Activated CD8-positive, alpha-beta memory T cell treated with anti-CD3 and anti-CD28 coated beads, Interleukin-2, amount 10 ng/mL, durations not matched to agents 7 days and 5 days (primary cell): ENCODE measurements at regions of chr22 and their contacts with region 1.

Region 1: GRCh38 chr22:36065775-36066559 is 37.3 kb upstream of the RBFOX2 start:
- DNase-seq: peak; percentile 81
- ATAC-seq: peak; percentile 87
- H3K4me3 Mint-ChIP-seq: peak overlapping the region; percentile 77
- H3K27ac Mint-ChIP-seq: peak overlapping the region; percentile 80
- H3K4me1 Mint-ChIP-seq: peaks cover 8% of the 10 kb centered on the region
- H3K27me3 Mint-ChIP-seq: peaks cover 18% of the 10 kb centered on the region

Region 2: GRCh38 chr22:35489239-35489638 is 576.7 kb before region 1 on chr22:
- CTCF ChIA-PET with region 1: no interaction called
- DNase-seq: no peak
- ATAC-seq: no peak
- H3K4me3 Mint-ChIP-seq: no peak overlapping the region
- H3K27ac Mint-ChIP-seq: no peak overlapping the region
- H3K4me1 Mint-ChIP-seq: no peaks in the 10 kb centered on the region
- H3K27me3 Mint-ChIP-seq: peaks cover 4% of the 10 kb centered on the region

Region 3: GRCh38 chr22:35627264-35628041 is 438.5 kb before region 1 on chr22:
- CTCF ChIA-PET with region 1: interaction called, 11 read pairs
- DNase-seq: peak; percentile 80
- ATAC-seq: peak; percentile 67
- H3K4me3 Mint-ChIP-seq: peak overlapping the region; percentile 76
- H3K27ac Mint-ChIP-seq: peak overlapping the region; percentile 61
- H3K4me1 Mint-ChIP-seq: peaks cover 28% of the 10 kb centered on the region
- H3K27me3 Mint-ChIP-seq: peaks cover 17% of the 10 kb centered on the region

Region 4: DNA sequence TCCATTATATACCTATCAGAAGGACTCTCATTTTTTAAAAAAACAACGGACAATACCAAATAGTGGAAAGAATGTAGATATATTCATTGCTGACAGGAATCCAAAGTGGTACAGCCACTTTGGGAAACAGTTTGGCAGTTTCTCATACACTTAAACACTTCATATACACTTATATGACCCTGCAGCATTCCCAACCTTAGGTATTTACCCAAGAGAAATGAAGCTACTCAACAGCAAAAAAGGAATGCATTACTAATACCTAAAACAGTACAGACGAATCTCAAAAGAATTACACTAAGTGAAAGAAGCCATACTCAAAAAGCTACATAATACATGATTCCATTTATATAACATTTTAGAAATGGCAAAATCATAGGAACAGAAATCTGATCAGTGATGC is 88.8 kb before region 1 on chr22:
- CTCF ChIA-PET with region 1: no interaction called
- DNase-seq: no peak
- ATAC-seq: no peak
- H3K4me3 Mint-ChIP-seq: no peak overlapping the region
- H3K27ac Mint-ChIP-seq: no peak overlapping the region
- H3K4me1 Mint-ChIP-seq: no peaks in the 10 kb centered on the region
- H3K27me3 Mint-ChIP-seq: peaks cover 22% of the 10 kb centered on the region

Region 5: DNA sequence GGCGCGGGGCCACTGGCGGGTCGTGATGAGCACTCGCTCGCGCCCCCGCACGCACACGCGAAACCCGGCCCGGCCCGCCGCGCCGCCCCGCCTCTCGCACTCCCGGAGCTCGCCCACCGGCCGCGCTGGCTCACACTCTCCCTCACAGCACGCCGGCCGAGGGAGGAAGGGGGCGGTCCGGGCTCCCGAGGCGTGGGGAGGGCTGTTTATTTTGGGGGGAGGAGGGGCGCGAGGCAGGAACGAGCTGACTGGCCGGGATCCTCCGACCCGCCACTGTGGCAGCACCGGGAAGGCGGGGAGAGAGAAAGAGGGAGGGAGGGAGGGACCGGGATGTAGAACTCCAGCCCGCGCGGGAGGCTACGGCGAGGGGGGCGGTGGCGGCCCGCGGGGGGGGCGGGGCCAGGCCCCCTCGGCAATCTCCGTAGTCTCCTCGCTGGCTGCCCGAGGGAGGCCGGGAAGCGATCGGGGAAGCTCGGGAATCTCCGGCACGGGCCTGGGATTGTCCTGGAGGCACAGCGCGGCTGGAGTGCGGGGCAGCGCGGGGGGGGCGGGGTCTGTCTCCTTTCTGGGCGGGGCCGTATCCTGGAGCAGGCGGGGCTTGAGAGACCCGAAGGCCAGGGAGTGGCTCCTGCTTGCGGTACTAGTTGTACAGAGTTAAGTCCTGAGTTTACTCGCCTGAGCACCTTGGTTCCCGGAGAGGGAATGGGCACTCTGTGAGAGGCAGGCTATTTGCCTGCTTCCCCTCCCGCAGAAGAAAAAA is 37.1 kb before region 1 on chr22 and contains the start of gene RBFOX2:
- CTCF ChIA-PET with region 1: interaction called, 33 read pairs
- DNase-seq: peak; percentile 67
- ATAC-seq: peak; percentile 83
- H3K4me3 Mint-ChIP-seq: peak within 1 kb of the TSS; percentile 84
- H3K27ac Mint-ChIP-seq: peak within 1 kb of the TSS; percentile 37
- H3K4me1 Mint-ChIP-seq: peaks cover 16% of the 10 kb centered on the region
- H3K27me3 Mint-ChIP-seq: peaks cover 47% of the 10 kb centered on the region
- total RNA-seq, gene RBFOX2: 0.99 to 1.9 TPM

Region 6: GRCh38 chr22:36052505-36053270 is 13.3 kb before region 1 on chr22:
- CTCF ChIA-PET with region 1: interaction called, 60 read pairs
- DNase-seq: peak; percentile 52
- ATAC-seq: peak; percentile 76
- H3K4me3 Mint-ChIP-seq: no peak overlapping the region
- H3K27ac Mint-ChIP-seq: no peak overlapping the region
- H3K4me1 Mint-ChIP-seq: peaks cover 11% of the 10 kb centered on the region
- H3K27me3 Mint-ChIP-seq: peaks cover 10% of the 10 kb centered on the region

Region 7: DNA sequence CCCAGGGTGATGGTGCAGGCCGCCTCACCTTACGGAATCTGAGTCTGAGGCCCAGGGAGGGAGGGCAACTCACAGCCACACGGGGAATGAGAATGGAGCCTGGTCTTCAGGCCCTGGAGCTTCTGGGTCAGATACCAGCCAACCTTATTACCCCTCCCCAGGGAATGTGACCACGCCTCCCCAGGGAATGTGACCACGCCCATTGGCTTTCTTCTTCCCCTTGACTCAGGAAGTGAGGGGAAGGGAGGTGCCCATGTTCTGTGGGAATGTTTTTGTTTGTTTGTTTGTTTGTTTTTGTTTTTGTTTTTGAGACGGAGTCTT is 20.2 kb after region 1 on chr22:
- CTCF ChIA-PET with region 1: interaction called, 70 read pairs
- DNase-seq: no peak
- ATAC-seq: no peak
- H3K4me3 Mint-ChIP-seq: no peak overlapping the region
- H3K27ac Mint-ChIP-seq: no peak overlapping the region
- H3K4me1 Mint-ChIP-seq: peaks cover 7% of the 10 kb centered on the region
- H3K27me3 Mint-ChIP-seq: no peaks in the 10 kb centered on the region

Region 8: DNA sequence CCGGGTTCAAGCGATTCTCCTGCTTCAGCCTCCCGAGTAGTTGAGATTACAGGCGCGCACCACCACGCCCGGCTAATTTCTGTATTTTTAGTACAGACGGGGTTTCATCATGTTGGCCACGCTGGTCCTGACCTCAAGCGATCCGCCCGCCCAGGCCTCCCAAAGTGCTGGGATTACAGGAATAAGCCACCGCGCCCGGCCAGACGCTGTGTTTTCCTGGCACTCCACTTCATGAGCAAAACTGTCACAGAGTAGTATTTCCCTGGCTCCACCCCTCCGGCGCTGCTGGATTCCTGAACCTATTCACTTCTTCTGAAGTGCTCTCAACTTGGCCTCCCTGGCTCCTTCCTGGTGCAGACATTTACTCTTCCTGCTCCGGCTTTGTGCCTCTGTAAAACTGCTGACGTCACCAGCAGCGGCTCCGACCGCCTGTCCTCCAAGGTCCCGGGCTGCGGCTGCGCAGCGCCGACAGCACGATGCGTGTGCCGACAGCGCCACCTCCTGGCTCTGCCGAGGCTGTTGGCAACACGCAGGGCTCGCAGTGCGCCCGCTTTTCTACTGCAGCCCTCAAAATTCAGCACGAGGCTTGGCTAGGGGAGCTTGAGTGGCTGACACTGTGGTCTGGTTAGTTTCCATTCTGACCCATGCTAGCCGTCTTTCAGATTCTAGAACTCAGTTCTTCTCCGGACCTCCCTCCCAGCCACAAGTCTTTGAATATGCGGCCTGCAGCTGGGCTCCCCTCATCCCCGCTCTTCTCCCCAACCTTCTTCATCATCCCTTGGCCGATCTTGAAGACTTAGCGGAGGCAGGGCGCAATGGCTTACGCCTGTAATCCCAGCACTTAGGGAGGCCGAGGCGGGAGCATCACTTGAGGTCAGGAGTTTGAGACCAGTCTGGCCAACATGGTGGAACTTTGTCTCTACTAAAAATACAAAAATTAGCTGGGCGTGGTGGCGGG is 58.0 kb after region 1 on chr22:
- CTCF ChIA-PET with region 1: interaction called, 33 read pairs
- DNase-seq: peak; percentile 95
- ATAC-seq: peak; percentile 99
- H3K4me3 Mint-ChIP-seq: peak overlapping the region; percentile 56
- H3K27ac Mint-ChIP-seq: peak overlapping the region; percentile 79
- H3K4me1 Mint-ChIP-seq: peaks cover 15% of the 10 kb centered on the region
- H3K27me3 Mint-ChIP-seq: peaks cover 2% of the 10 kb centered on the region

Region 9: DNA sequence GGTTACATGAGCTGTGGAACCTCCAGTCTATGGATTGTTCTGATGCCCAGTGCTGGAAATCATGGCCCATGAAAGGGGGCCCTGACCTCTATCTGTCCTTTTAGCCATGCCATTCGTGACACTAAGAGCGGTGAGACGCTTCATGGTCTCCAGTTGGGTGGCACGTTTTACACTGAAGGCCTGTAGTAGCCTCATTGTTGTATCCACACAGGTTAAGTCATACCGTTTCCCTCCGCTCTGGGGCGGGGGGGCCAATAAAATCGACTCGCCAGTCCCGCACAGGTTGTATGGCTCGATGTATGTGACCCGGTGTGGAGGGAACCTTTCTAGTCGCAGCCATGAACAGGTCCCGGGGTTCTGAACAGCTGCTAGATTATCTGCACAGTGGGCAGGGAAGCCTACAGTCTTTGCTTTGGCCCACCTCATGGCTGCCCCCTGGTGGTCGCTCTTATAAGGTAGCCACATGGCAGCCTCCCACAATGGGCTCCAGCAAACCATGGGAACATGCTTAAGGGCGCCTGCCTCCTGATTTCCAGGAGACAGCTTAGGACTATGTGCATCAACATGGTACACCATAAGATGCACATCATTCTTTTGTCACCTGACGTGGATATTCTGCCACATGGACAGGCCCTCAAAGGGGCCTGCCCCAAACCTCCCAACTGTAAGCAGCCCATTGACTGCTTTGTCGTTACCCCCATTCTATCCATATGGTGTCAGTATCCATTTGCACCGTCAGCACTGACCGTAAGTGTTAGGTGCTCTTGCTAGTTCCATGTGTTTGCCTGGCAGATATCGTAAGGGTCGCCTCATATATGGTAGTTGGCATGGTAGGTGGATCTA is 114.3 kb after region 1 on chr22:
- CTCF ChIA-PET with region 1: interaction called, 18 read pairs
- DNase-seq: peak; percentile 89
- ATAC-seq: peak; percentile 98
- H3K4me3 Mint-ChIP-seq: no peak overlapping the region
- H3K27ac Mint-ChIP-seq: no peak overlapping the region
- H3K4me1 Mint-ChIP-seq: peaks cover 3% of the 10 kb centered on the region
- H3K27me3 Mint-ChIP-seq: peaks cover 2% of the 10 kb centered on the region